ENCODE measurements at regions of chr4 and their contacts with region 1.

Region 1: GRCh38 chr4:10554694-10555093 is 97.5 kb upstream of the ZNF518B start:
- DNase-seq: no peak
- H3K4me3 ChIP-seq: no peak overlapping the region
- H3K27ac ChIP-seq: no peak overlapping the region
- H3K27me3 ChIP-seq: peaks cover 3% of the 10 kb centered on the region
- CTCF ChIP-seq: peak; percentile 87

Region 2: DNA sequence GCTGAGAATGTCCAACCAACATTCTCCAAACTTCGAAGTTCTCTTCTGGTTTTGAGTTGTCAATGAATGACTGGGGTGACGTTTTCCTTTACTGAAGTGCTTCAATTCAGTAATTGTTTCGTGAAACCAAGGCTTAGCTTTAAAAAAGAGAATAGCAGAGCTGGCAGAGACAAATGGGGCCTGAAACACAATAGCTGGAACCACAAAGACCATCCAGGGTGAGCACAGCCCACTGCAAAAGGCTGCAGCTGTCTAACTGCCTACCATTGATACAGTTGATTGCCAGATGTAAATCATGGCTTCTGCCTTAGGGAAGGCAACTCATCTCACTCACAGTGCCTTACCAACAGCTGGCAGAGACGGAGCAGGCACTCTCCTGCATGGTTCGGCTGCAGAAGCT is 18.8 kb before region 1 on chr4:
- CTCF ChIA-PET with region 1: interaction called, 28 read pairs
- POLR2A ChIA-PET with region 1: no interaction called
- DNase-seq: no peak
- H3K4me3 ChIP-seq: no peak overlapping the region
- H3K27ac ChIP-seq: no peak overlapping the region
- H3K27me3 ChIP-seq: no peaks in the 10 kb centered on the region
- CTCF ChIP-seq: no peak

Measured in AG04450 (cell line).